Activated CD8-positive, alpha-beta T cell treated with anti-CD3 and anti-CD28 coated beads, Interleukin-2, amount 10 ng/mL, durations not matched to agents 7 days and 5 days (primary cell): ENCODE measurements at regions of chr12 and their contacts with region 1.

Region 1: GRCh38 chr12:110245369-110245772 is 35.7 kb upstream of the ATP2A2 start:
- DNase-seq: peak; percentile 62
- ATAC-seq: peak; percentile 89
- H3K4me3 Mint-ChIP-seq: no peak overlapping the region
- H3K27ac Mint-ChIP-seq: no peak overlapping the region
- H3K4me1 Mint-ChIP-seq: no peaks in the 10 kb centered on the region
- H3K27me3 Mint-ChIP-seq: peaks cover 3% of the 10 kb centered on the region

Region 2: DNA sequence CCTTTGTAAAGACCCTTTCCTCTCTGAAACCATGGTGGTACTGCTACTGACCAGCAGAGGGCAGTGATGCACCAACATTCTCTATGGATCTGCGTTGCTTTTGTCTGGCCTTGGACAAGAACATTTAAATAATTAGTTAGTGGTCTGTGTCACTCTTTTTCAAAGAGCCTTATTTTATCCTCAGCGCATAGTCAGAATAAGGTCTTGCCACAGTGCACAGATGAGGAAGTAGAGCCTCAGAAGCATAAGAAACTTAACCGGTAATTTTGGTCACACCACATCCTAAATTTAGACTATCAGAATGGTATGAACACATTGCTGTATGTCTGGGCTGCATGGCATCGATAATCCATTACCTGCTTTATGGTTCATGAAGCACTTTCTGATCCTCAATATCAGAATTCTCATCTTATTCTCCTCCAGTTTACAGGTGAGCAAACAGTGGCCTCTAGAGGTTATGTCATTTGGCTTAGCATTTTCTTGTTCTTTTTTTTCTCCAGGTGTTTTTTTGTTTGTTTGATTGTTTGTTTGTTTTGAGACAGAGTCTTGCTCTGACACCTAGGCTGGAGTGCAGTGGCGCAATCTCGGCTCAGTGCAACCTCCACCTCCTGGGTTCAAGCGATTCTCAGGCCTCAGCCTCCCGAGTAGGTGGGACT is 144.9 kb before region 1 on chr12:
- CTCF ChIA-PET with region 1: interaction called, 27 read pairs
- POLR2A ChIA-PET with region 1: no interaction called
- DNase-seq: peak; percentile 76
- ATAC-seq: peak; percentile 69
- H3K4me3 Mint-ChIP-seq: no peak overlapping the region
- H3K27ac Mint-ChIP-seq: peak overlapping the region; percentile 44
- H3K4me1 Mint-ChIP-seq: peaks cover 16% of the 10 kb centered on the region
- H3K27me3 Mint-ChIP-seq: no peaks in the 10 kb centered on the region

Region 3: DNA sequence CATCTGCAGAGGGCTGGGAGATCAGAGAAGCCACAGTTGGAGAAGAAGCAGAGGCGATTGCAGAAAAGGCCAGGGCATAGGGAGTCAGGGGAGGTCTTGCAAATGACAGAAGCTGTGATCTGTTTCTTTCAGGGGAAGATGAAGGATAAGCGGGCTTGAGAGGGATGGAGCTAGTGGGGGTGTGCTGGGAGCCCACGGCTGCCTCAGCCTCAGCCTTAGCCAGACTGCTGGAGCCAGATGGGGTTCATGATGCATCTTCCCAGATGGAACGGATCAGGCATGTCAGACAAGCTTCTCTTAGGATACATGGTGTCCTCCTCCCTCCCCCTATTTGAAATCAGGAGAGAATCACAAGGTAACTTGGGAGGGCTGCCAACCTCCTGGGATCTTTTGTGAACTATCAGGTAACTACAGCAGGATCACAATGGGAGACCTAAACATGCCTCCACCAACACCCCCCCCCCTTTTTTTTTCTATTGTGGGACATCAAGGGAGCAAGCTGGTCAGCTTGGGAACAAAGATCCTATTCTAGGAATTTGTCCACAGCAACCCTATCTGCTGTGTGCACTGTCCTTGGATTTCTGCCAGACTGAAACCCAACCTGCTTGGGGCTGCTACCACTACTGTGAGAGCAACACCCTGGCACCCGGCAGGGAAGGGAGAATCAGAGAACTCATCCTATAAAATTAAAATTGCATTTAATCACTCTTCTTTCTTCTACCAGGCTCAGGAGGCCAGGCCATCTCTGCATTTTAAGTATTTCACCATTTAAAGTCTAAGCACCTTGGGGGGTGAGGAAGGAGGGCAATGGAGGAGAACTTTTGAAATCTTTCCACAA is 25.0 kb after region 1 on chr12:
- CTCF ChIA-PET with region 1: no interaction called
- POLR2A ChIA-PET with region 1: no interaction called
- DNase-seq: no peak
- ATAC-seq: no peak
- H3K4me3 Mint-ChIP-seq: no peak overlapping the region
- H3K27ac Mint-ChIP-seq: no peak overlapping the region
- H3K4me1 Mint-ChIP-seq: no peaks in the 10 kb centered on the region
- H3K27me3 Mint-ChIP-seq: peaks cover 38% of the 10 kb centered on the region